ENCODE measurements at regions of chr10 and their contacts with region 1.

Region 1: GRCh38 chr10:62594093-62594520 is 210.4 kb upstream of the ADO start:
- DNase-seq: peak; percentile 27
- ATAC-seq: peak; percentile 94
- H3K4me3 ChIP-seq: no peak overlapping the region
- H3K27ac ChIP-seq: no peak overlapping the region
- H3K4me1 ChIP-seq: no peaks in the 10 kb centered on the region
- H3K27me3 ChIP-seq: no peaks in the 10 kb centered on the region
- CTCF ChIP-seq: peak; percentile 85
- EP300 ChIP-seq: no peak
- POLR2A ChIP-seq: no peak
- RAD21 ChIP-seq: peak; percentile 69

Region 2: GRCh38 chr10:63083904-63084689 is 490.0 kb after region 1 on chr10:
- CTCF ChIA-PET with region 1: interaction called, 9 read pairs
- POLR2A ChIA-PET with region 1: no interaction called
- in situ Hi-C with region 1: loop called (anchors 25 kb)
- intact Hi-C with region 1: loop called (anchors 1 kb)
- DNase-seq: peak; percentile 62
- ATAC-seq: peak; percentile 93
- H3K4me3 ChIP-seq: no peak overlapping the region
- H3K27ac ChIP-seq: no peak overlapping the region
- H3K4me1 ChIP-seq: no peaks in the 10 kb centered on the region
- H3K27me3 ChIP-seq: no peaks in the 10 kb centered on the region
- CTCF ChIP-seq: peak; percentile 78
- EP300 ChIP-seq: no peak
- POLR2A ChIP-seq: no peak
- RAD21 ChIP-seq: peak; percentile 46; the same call in 1 of the 2 replicates

Region 3: GRCh38 chr10:63133056-63133820 is 539.1 kb after region 1 on chr10 and contains the start of gene NRBF2:
- CTCF ChIA-PET with region 1: no interaction called
- POLR2A ChIA-PET with region 1: no interaction called
- in situ Hi-C with region 1: no loop called
- intact Hi-C with region 1: no loop called
- DNase-seq: peak; percentile 97
- ATAC-seq: peak; percentile 96
- H3K4me3 ChIP-seq: peak within 1 kb of the TSS; percentile 77 to 91 (median 88)
- H3K27ac ChIP-seq: peak within 1 kb of the TSS; percentile 92
- H3K4me1 ChIP-seq: peaks cover 44% of the 10 kb centered on the region
- H3K27me3 ChIP-seq: no peaks in the 10 kb centered on the region; a peak in 1 of 5 replicates
- CTCF ChIP-seq: peak; percentile 74
- EP300 ChIP-seq: no peak
- POLR2A ChIP-seq: peak; percentile 92 to 96
- RAD21 ChIP-seq: 0 out of 2 replicates have a peak, but pooled peaks have one; percentile 15
- total RNA-seq, gene NRBF2: 28.4 and 39.0 TPM in 2 replicates